ENCODE measurements at regions of chr5 and their contacts with region 1.

Region 1: DNA sequence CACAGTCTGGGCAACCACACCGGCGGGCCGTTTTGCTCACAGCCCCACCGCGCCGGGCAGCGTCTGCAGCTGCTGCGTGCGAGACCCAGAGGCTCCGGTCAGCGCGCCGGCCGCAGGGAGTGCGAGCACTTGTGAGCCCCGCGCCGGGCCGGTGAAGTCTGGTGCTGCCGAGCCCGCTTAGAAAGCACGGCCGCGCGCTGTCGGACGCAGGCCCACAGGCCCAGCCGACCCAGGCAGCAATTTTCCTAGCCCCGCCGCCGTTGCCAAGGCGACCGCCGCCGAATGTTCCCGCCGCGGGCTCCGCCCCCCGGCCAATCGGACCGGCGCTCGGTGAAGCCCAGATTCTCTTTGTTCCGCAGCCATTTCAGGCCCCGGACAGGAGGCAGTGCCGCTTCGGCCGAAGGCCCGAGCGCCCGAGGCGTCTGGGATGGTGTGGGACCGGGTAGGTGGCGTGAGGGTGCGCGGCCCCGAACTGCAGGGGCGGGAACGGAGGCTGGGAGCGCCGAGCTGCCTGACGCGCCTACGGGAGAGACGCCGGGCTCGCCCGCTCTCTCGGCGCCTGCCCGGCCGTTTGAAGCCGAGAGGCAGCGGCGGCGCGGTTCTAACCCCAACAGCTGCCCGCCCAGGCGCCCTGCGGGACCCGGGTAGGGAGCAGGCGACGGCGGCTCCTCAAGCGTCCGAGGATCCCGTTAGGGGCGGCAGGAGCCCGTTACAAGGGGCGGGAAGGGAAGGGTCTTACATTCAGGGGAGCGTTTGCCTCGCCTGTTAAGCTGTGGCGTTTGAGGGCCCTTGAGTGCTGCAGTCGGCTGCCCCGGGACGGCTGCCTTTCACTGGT is at the start of gene TNPO1:
- DNase-seq: peak; percentile 96
- H3K4me3 ChIP-seq: peak within 1 kb of the TSS; percentile 74
- H3K27ac ChIP-seq: peak within 1 kb of the TSS; percentile 96
- H3K4me1 ChIP-seq: peaks cover 45% of the 10 kb centered on the region
- H3K27me3 ChIP-seq: no peaks in the 10 kb centered on the region
- CTCF ChIP-seq: no peak
- total RNA-seq, gene TNPO1: 69.8 TPM

Region 2: GRCh38 chr5:72611118-72611730 is 205.3 kb before region 1 on chr5:
- intact Hi-C with region 1: loop called (anchors 10 kb)
- DNase-seq: peak; percentile 72
- H3K4me3 ChIP-seq: peak overlapping the region; percentile 3
- H3K27ac ChIP-seq: no peak overlapping the region
- H3K4me1 ChIP-seq: peaks cover 9% of the 10 kb centered on the region
- H3K27me3 ChIP-seq: no peaks in the 10 kb centered on the region
- CTCF ChIP-seq: peak; percentile 98